ENCODE measurements at regions of chr3 and their contacts with region 1.

Region 1: GRCh38 chr3:194659778-194660177 is 12.2 kb downstream of the LSG1 start:
- DNase-seq: no peak
- H3K4me3 ChIP-seq: no peak overlapping the region
- H3K27ac ChIP-seq: no peak overlapping the region
- H3K4me1 ChIP-seq: no peaks in the 10 kb centered on the region
- H3K27me3 ChIP-seq: no peaks in the 10 kb centered on the region
- CTCF ChIP-seq: no peak

Region 2: GRCh38 chr3:195133462-195133861 is 473.7 kb after region 1 on chr3:
- CTCF ChIA-PET with region 1: interaction called, 18 read pairs
- POLR2A ChIA-PET with region 1: no interaction called
- intact Hi-C with region 1: no loop called
- DNase-seq: no peak
- H3K4me3 ChIP-seq: no peak overlapping the region
- H3K27ac ChIP-seq: no peak overlapping the region
- H3K4me1 ChIP-seq: no peaks in the 10 kb centered on the region
- H3K27me3 ChIP-seq: no peaks in the 10 kb centered on the region
- CTCF ChIP-seq: no peak